Naive thymus-derived CD4-positive, alpha-beta T cell (primary cell): ENCODE measurements at regions of chr1 and their contacts with region 1.

Region 1: DNA sequence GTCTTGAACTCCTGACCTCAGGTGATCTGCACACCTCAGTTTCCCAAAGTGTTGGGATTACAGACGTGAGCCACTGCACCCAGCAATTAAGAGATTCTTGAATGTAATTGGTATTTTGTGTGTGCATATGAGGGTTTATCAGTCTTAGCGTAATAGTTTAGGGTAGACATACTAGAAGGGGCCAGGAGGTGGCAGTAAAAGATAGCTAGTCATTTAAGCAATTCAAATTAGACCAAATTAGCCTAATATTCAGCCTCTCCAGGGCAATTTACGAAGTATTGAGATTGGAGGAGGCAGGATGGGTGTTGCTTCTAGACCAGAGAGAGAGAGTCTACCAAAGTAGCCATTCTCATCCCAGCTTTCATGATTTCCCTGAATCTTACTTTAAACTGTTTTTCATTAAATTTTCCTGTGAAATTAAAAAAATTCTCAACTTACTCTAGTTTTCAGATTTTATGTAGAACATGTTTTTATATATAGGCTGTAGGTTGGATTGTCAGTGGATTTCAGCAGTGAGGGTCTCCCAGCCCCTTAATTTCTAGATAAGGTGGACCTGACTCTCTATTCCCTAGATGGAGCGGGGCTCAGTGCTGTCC is 119.7 kb downstream of the HHAT start:
- DNase-seq: peak in 3 of 9 donors; percentile 6 to 16 (median 9)
- ATAC-seq: no peak
- H3K4me3 ChIP-seq: no peak overlapping the region
- H3K4me3 Mint-ChIP-seq: no peak overlapping the region
- H3K27ac ChIP-seq: no peak overlapping the region
- H3K27ac Mint-ChIP-seq: no peak overlapping the region
- H3K4me1 ChIP-seq: peaks cover 6 to 7% of the 10 kb centered on the region in 2 donors
- H3K4me1 Mint-ChIP-seq: peaks cover 6 to 15% (median 14%) of the 10 kb centered on the region in 7 donors
- H3K27me3 ChIP-seq: no peaks in the 10 kb centered on the region
- H3K27me3 Mint-ChIP-seq: peaks cover 0 to 13% (median 0%) of the 10 kb centered on the region in 5 donors

Region 2: DNA sequence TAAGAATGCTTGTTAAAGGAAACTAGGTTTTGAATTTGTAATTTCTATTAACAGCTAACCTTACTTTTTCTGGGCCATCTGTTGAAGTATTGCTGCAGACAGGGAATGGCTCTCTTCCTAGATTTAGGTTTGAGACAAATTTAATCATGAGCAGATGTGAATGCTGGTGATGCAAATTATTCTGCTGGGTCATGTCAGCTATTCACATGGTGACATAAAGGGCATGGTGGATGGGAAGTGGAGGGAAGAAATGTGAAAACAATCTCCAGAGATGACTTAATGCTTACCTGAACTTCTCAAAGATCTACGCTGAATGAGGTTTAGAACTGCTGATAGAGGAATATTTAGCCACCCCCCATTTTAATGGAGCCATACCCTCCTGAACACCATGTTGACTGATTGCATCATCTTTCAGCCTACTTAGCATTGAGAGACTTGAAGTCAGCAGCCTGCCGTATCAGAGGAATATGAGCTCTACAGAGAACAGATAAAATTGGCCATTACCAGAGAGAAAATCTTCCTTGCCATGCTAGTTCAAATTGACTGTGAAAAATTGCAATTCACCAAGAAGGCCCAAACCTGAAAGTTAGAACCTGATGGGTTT is 19.1 kb after region 1 on chr1:
- CTCF ChIA-PET with region 1: no interaction called
- POLR2A ChIA-PET with region 1: no interaction called
- intact Hi-C with region 1: no loop called
- DNase-seq: no peak
- ATAC-seq: no peak
- H3K4me3 ChIP-seq: no peak overlapping the region
- H3K4me3 Mint-ChIP-seq: no peak overlapping the region
- H3K27ac ChIP-seq: no peak overlapping the region
- H3K27ac Mint-ChIP-seq: no peak overlapping the region
- H3K4me1 ChIP-seq: no peaks in the 10 kb centered on the region
- H3K4me1 Mint-ChIP-seq: peaks cover 0 to 14% (median 0%) of the 10 kb centered on the region in 7 donors
- H3K27me3 ChIP-seq: no peaks in the 10 kb centered on the region
- H3K27me3 Mint-ChIP-seq: peaks cover 0 to 6% (median 0%) of the 10 kb centered on the region in 5 donors

Region 3: GRCh38 chr1:210496063-210496462 is 47.7 kb after region 1 on chr1:
- CTCF ChIA-PET with region 1: no interaction called
- POLR2A ChIA-PET with region 1: no interaction called
- intact Hi-C with region 1: no loop called
- DNase-seq: no peak
- ATAC-seq: no peak
- H3K4me3 ChIP-seq: no peak overlapping the region
- H3K4me3 Mint-ChIP-seq: no peak overlapping the region
- H3K27ac ChIP-seq: no peak overlapping the region
- H3K27ac Mint-ChIP-seq: no peak overlapping the region
- H3K4me1 ChIP-seq: no peaks in the 10 kb centered on the region
- H3K4me1 Mint-ChIP-seq: peaks cover 0 to 2% (median 0%) of the 10 kb centered on the region in 7 donors
- H3K27me3 ChIP-seq: no peaks in the 10 kb centered on the region
- H3K27me3 Mint-ChIP-seq: peaks cover 0 to 2% (median 0%) of the 10 kb centered on the region in 5 donors

Region 4: DNA sequence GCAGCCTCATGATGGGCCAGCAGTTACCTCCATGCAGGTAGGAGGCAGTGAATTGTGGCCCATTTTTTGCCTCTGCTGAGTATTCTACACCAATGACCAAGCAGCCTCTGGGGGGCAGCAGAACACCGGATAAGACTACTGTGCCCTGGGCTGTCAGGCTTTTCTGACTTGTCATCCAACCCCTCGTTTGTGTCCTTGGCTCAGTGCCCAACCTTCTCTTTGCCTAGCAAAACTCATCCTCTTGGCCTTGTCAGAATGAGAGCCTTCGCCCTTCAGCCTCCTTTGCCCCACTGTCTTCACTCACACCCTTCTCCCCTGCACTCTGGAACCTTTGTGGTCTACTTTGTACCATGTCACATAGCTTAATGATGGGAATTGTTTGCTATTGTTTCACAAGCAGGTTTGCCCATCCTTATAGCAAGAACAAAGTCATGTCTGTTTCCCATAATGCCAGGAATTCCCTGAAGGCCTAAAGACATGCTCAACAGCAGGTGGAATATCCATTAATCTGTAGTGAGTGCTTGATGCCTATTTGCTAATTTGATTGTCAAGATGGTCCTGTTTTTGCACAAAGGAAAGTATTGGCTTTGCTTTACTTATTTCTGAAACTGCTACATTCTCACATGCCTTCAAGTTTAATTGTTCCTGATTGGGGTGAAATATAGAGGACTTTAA is 136.2 kb after region 1 on chr1:
- CTCF ChIA-PET with region 1: interaction called, 3 read pairs
- POLR2A ChIA-PET with region 1: no interaction called
- intact Hi-C with region 1: loop called in 1 of 2 experiments (anchors 2 kb)
- DNase-seq: peak; percentile 7 to 63 (median 47)
- ATAC-seq: peak; percentile 70
- H3K4me3 ChIP-seq: no peak overlapping the region
- H3K4me3 Mint-ChIP-seq: no peak overlapping the region
- H3K27ac ChIP-seq: no peak overlapping the region
- H3K27ac Mint-ChIP-seq: no peak overlapping the region
- H3K4me1 ChIP-seq: no peaks in the 10 kb centered on the region
- H3K4me1 Mint-ChIP-seq: peaks cover 0 to 8% (median 0%) of the 10 kb centered on the region in 7 donors
- H3K27me3 ChIP-seq: no peaks in the 10 kb centered on the region
- H3K27me3 Mint-ChIP-seq: peaks cover 0 to 6% (median 3%) of the 10 kb centered on the region in 5 donors

Region 5: GRCh38 chr1:210800756-210801155 is 352.4 kb after region 1 on chr1:
- CTCF ChIA-PET with region 1: no interaction called
- POLR2A ChIA-PET with region 1: no interaction called
- intact Hi-C with region 1: no loop called
- DNase-seq: no peak
- ATAC-seq: no peak
- H3K4me3 ChIP-seq: no peak overlapping the region
- H3K4me3 Mint-ChIP-seq: no peak overlapping the region
- H3K27ac ChIP-seq: no peak overlapping the region
- H3K27ac Mint-ChIP-seq: no peak overlapping the region
- H3K4me1 ChIP-seq: no peaks in the 10 kb centered on the region
- H3K4me1 Mint-ChIP-seq: no peaks in the 10 kb centered on the region
- H3K27me3 ChIP-seq: no peaks in the 10 kb centered on the region
- H3K27me3 Mint-ChIP-seq: peaks cover 1 to 36% (median 16%) of the 10 kb centered on the region in 5 donors

Region 6: GRCh38 chr1:211068976-211069375 is 620.6 kb after region 1 on chr1:
- CTCF ChIA-PET with region 1: no interaction called
- POLR2A ChIA-PET with region 1: no interaction called
- intact Hi-C with region 1: no loop called
- DNase-seq: no peak
- ATAC-seq: no peak
- H3K4me3 ChIP-seq: no peak overlapping the region
- H3K4me3 Mint-ChIP-seq: no peak overlapping the region
- H3K27ac ChIP-seq: no peak overlapping the region
- H3K27ac Mint-ChIP-seq: no peak overlapping the region
- H3K4me1 ChIP-seq: no peaks in the 10 kb centered on the region
- H3K4me1 Mint-ChIP-seq: no peaks in the 10 kb centered on the region
- H3K27me3 ChIP-seq: no peaks in the 10 kb centered on the region
- H3K27me3 Mint-ChIP-seq: peaks cover 4 to 22% (median 17%) of the 10 kb centered on the region in 5 donors

Region 7: DNA sequence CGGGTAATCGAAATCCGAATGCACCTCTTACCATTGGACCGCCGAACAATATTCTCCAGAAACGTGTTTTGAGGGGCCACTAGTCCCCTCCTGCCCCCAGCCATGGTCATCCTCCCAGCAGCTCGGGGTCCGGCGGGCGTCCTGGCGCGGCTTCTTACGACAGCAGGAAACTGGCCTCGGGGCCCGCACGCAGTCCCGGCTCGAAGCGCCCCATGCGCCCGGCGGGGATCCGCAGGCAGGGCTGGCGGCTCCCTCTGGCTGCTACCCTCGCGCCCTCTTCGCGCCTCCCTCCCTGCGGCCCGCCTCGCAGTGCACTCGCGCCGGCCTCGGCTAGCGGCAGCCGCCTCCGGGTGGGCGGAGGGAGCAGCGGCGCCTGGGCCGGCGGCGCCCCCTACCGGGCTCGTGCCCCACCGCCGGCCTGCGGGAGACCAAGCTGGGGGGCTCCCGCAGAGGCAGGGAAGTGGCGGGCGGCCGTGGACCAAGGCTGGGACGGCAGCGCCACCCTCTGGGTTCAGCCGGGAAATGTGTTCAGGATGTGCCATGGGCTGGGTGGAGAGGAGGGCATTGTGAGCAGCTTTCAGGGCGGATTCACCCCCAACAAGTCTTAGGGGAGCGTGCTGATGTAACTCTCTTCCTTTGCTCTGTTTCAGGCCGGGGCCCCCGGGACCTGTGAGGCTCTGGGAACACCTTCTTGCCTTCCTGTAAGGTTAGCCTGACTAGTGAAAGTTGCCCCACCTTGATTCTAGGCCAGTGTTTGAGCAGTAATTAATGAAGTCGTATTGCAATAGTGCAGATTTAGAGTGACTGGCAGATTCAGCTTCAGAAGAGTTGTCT is 685.7 kb after region 1 on chr1 and contains the start of gene KCNH1:
- CTCF ChIA-PET with region 1: interaction called, 5 read pairs
- POLR2A ChIA-PET with region 1: no interaction called
- intact Hi-C with region 1: loop called in 1 of 2 experiments (anchors 1 kb)
- DNase-seq: peak; percentile 55 to 81 (median 71)
- ATAC-seq: peak; percentile 93
- H3K4me3 ChIP-seq: peak within 1 kb of the TSS; percentile 50
- H3K4me3 Mint-ChIP-seq: peak within 1 kb of the TSS; percentile 65 to 88 (median 78)
- H3K27ac ChIP-seq: no peak within 1 kb of the TSS
- H3K27ac Mint-ChIP-seq: no peak within 1 kb of the TSS
- H3K4me1 ChIP-seq: peaks cover 3 to 5% of the 10 kb centered on the region in 2 donors
- H3K4me1 Mint-ChIP-seq: peaks cover 0 to 10% (median 7%) of the 10 kb centered on the region in 7 donors
- H3K27me3 ChIP-seq: peaks cover 0 to 6% of the 10 kb centered on the region in 2 donors
- H3K27me3 Mint-ChIP-seq: peaks cover 19 to 89% (median 64%) of the 10 kb centered on the region in 5 donors
- total RNA-seq, gene KCNH1: not detected

Region 8: DNA sequence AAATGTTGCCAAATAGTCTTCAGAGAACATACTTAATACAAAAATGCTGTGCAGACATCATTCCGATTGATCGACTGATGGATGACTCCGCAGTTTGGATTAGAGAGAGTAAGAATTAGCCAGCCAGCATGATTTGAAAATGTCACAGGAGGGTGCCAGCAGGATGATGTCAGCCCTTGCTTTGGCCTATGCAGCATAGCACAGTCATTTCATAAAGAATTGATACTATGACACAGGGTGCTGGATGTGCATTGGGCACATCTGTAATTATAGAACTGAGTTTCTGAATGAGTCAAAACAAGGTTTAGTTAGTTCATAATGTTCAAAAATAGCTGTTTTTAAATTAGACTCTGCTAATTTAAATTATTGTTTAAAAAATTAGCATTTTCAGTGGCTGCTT is 856.6 kb after region 1 on chr1:
- CTCF ChIA-PET with region 1: no interaction called
- POLR2A ChIA-PET with region 1: no interaction called
- intact Hi-C with region 1: loop called in 1 of 2 experiments (anchors 5 kb)
- DNase-seq: no peak
- ATAC-seq: no peak
- H3K4me3 ChIP-seq: no peak overlapping the region
- H3K4me3 Mint-ChIP-seq: no peak overlapping the region
- H3K27ac ChIP-seq: no peak overlapping the region
- H3K27ac Mint-ChIP-seq: peak overlapping the region in 4 of 9 donors; percentile 4 to 43 (median 34)
- H3K4me1 ChIP-seq: no peaks in the 10 kb centered on the region
- H3K4me1 Mint-ChIP-seq: peaks cover 7 to 53% (median 39%) of the 10 kb centered on the region in 7 donors
- H3K27me3 ChIP-seq: no peaks in the 10 kb centered on the region
- H3K27me3 Mint-ChIP-seq: no peaks in the 10 kb centered on the region

Region 9: GRCh38 chr1:211654838-211655787 is 1206.7 kb after region 1 on chr1:
- CTCF ChIA-PET with region 1: no interaction called
- POLR2A ChIA-PET with region 1: no interaction called
- intact Hi-C with region 1: loop called in 1 of 2 experiments (anchors 2 kb)
- DNase-seq: peak; percentile 60 to 82 (median 71)
- ATAC-seq: peak; percentile 95
- H3K4me3 ChIP-seq: no peak overlapping the region
- H3K4me3 Mint-ChIP-seq: no peak overlapping the region
- H3K27ac ChIP-seq: no peak overlapping the region
- H3K27ac Mint-ChIP-seq: no peak overlapping the region
- H3K4me1 ChIP-seq: no peaks in the 10 kb centered on the region
- H3K4me1 Mint-ChIP-seq: peaks cover 0 to 5% (median 0%) of the 10 kb centered on the region in 7 donors
- H3K27me3 ChIP-seq: no peaks in the 10 kb centered on the region
- H3K27me3 Mint-ChIP-seq: peaks cover 0 to 13% (median 0%) of the 10 kb centered on the region in 5 donors